Mammary epithelial cell (primary cell): ENCODE measurements at regions of chr2 and their contacts with region 1.

Region 1: DNA sequence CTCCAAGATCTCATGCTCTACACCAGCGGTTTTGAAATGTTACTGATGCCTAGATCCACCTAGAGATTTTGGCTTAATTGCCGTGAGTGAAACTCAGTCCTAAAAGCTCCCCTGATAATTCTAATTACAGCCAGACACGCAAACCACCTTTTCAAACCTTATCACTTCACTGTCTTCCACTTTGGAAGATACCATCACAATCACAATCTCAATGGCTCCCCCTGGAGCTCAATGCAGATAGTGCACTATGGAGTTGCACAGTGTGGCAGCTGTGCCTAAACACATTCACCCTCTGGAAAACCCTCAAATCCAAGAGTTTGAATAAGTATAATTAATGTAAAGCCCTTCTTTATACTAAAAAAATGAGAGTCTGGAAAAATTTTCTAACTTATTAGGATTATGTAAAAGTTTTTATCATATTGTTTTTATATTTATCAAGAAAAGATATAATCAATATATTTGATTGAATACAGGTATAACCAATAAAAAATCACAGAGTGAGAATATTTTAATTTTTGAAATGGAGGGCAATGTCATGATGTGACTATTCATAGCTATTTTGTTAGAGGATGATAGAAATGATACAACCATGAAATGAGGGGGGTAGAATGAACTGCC is 102.9 kb upstream of the SLC8A1 start:
- DNase-seq: peak; percentile 46
- H3K4me3 ChIP-seq: no peak overlapping the region
- H3K27ac ChIP-seq: no peak overlapping the region
- H3K4me1 ChIP-seq: no peaks in the 10 kb centered on the region
- H3K27me3 ChIP-seq: no peaks in the 10 kb centered on the region
- CTCF ChIP-seq: peak; percentile 75 to 90

Region 2: DNA sequence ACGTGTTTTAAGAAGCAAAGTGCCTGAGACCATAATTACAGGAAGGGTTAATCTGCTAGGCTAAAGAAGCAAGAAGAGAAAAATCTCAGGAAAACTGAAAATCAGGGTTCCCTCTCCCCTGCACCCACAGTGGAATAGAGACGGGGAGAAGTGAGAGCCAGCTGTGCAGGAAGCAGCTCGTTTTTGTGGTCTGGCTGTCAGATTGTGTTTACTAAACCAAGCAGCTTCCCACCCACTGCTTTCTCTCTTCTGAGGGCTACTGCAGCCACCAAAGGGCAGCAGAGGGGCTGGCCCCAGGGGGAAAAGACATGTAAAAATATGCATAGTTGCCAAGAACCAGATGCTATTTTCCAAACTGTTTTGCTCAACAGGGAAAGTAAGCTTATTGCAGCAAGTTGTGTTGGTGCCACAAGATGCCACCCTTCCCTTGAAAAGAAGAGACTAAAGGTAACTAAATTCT is 703.1 kb before region 1 on chr2:
- CTCF ChIA-PET with region 1: no interaction called
- dilution Hi-C with region 1: no loop called
- in situ Hi-C with region 1: no loop called
- intact Hi-C with region 1: loop called (anchors 10 kb)
- DNase-seq: peak; percentile 18
- H3K4me3 ChIP-seq: no peak overlapping the region
- H3K27ac ChIP-seq: no peak overlapping the region
- H3K4me1 ChIP-seq: peaks cover 18% of the 10 kb centered on the region
- H3K27me3 ChIP-seq: no peaks in the 10 kb centered on the region
- CTCF ChIP-seq: peak; percentile 10 to 27

Region 3: DNA sequence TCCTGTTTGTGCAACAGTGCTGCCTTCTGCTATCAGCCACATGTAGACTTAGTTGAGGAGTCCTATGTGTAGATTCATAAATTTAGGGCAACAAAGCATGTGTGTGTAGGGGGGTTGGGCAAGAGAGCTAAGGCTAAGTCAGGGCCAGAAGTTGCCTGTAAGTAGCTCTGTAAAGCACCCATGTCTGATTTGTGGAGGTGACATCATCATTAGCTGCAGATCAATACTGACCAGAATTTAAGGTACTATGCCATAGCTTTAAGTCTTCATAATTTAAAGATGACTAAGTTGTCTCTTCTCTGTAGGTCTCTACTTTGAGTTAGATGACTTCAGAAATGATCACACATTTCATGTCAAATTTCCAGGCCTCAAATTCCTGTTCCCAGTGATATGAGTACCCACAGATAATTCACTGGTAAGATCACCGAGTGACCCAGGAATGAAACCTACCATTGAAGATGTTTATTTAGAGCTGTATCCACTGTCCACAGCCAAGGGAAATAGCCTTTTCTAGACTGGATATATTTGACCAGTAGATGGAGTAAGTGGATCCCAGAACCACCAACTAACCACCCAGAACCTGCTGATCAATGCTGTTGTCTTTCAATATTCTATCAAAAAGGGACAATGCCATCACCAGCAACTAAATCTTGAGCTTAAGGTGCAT is 341.8 kb before region 1 on chr2:
- CTCF ChIA-PET with region 1: no interaction called
- dilution Hi-C with region 1: no loop called
- in situ Hi-C with region 1: no loop called
- intact Hi-C with region 1: loop called (anchors 1 kb)
- DNase-seq: no peak
- H3K4me3 ChIP-seq: no peak overlapping the region
- H3K27ac ChIP-seq: no peak overlapping the region
- H3K4me1 ChIP-seq: no peaks in the 10 kb centered on the region
- H3K27me3 ChIP-seq: no peaks in the 10 kb centered on the region
- CTCF ChIP-seq: peak; percentile 27 to 53

Region 4: GRCh38 chr2:40281021-40281940 is 273.5 kb before region 1 on chr2:
- CTCF ChIA-PET with region 1: interaction called, 3 read pairs
- dilution Hi-C with region 1: no loop called
- in situ Hi-C with region 1: no loop called
- intact Hi-C with region 1: loop called (anchors 5 kb)
- DNase-seq: peak; percentile 91
- H3K4me3 ChIP-seq: no peak overlapping the region
- H3K27ac ChIP-seq: peak overlapping the region; percentile 4
- H3K4me1 ChIP-seq: peaks cover 27% of the 10 kb centered on the region
- H3K27me3 ChIP-seq: no peaks in the 10 kb centered on the region
- CTCF ChIP-seq: no peak

Region 5: DNA sequence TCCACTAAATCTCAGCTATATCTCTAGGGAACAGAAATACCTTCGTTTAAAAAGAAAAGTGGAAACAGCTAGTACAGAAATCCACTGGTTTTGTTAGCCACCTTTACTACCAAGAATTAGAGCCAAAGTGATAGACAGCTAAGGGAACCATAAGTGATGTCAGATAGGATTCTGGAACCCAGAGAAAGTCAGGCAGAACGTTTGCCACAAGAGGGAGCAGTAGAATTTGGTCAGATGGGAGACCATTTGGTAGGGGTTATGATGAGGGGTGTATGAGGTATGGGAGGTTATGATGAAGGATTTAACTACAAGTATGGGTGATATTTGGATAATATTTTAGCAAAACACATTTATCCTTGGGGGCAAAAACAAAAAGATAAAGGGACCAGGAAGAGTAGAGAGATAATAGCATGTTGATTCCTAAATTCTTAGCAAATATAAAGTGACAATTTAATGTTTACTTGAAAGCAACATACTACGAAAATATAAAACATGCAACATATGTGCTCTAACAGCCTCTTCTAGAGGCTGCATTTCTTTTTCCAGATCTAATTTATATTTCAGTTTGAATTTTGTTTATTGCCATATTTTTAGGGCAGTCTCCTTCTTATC is 106.2 kb before region 1 on chr2:
- CTCF ChIA-PET with region 1: no interaction called
- dilution Hi-C with region 1: no loop called
- in situ Hi-C with region 1: no loop called
- intact Hi-C with region 1: loop called (anchors 2 kb)
- DNase-seq: peak; percentile 21
- H3K4me3 ChIP-seq: no peak overlapping the region
- H3K27ac ChIP-seq: no peak overlapping the region
- H3K4me1 ChIP-seq: peaks cover 16% of the 10 kb centered on the region
- H3K27me3 ChIP-seq: no peaks in the 10 kb centered on the region
- CTCF ChIP-seq: peak; percentile 66 to 69

Region 6: DNA sequence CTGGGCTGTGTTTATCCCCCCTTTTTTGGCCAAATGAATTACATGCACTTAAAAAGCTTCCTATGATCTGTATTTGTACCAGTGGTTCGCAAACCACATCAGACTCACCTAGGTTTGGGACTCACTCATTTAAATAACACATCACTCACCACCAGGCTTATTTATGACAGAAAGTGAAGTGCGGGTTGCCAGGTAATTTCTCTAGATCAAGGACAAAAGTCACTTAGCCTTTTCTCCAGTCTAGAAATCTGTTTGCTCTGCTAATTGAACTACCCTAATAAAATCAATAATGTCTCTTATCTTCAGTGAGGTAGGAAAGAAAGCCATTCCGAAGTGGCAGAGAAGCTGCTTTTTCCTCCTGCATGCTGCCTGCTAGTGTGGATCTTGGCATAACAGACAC is 14.8 kb before region 1 on chr2:
- CTCF ChIA-PET with region 1: no interaction called
- dilution Hi-C with region 1: no loop called
- in situ Hi-C with region 1: no loop called
- intact Hi-C with region 1: no loop called
- DNase-seq: no peak
- H3K4me3 ChIP-seq: no peak overlapping the region
- H3K27ac ChIP-seq: no peak overlapping the region
- H3K4me1 ChIP-seq: no peaks in the 10 kb centered on the region
- H3K27me3 ChIP-seq: no peaks in the 10 kb centered on the region
- CTCF ChIP-seq: no peak

Region 7: DNA sequence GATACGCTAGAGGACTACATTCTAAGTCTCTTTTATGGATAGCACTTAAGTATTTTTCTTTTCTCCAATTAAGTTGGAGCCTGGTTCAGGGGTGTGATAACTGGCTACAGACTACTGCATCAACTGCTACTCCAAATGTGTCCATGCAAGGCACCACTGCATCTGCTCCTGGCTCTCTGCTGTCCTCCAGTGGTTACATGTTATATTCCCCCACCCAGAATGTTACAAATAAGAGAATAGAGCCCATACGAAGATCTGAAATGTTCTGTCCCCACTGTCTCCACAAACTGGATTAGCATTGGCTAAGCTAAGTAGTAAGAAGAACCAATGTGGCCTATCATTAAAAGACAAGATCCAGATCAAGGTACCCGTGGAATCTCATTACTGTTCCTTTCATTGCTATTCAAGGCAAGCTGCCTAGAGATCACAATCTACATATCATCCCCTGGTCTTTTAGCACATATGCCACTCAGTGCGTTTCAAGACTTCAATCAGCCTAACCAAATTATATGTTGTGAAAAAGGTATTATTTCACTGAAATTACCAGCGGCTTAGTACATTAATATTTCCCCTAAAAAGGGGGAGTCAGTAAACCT is 205.4 kb after region 1 on chr2:
- CTCF ChIA-PET with region 1: no interaction called
- dilution Hi-C with region 1: no loop called
- in situ Hi-C with region 1: no loop called
- intact Hi-C with region 1: loop called (anchors 2 kb)
- DNase-seq: peak; percentile 39
- H3K4me3 ChIP-seq: no peak overlapping the region
- H3K27ac ChIP-seq: no peak overlapping the region
- H3K4me1 ChIP-seq: peaks cover 7% of the 10 kb centered on the region
- H3K27me3 ChIP-seq: no peaks in the 10 kb centered on the region
- CTCF ChIP-seq: peak; percentile 97 to 99